ENCODE measurements at regions of chr5 and their contacts with region 1.

Region 1: DNA sequence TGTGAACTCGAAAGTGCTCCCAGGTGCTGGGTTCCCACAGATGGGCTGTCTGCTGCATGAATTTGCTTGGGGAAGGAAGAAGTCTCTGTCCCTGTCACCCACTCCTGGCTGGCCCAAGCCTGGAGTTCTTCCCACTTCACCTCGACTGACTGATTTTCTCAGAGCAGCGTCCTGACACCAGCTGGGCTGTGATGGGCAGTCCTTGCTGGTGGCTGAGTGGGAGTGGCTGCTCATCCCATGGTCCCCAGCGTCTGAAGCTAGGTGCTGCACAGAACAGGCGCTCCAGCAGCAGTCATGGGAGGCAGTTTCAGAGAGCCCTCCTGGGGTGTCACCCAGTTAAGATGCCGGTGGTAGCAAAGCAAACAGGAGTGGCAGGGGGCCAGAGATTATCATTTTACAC is 10.1 kb upstream of the NEURL1B start:
- DNase-seq: no peak
- H3K4me3 ChIP-seq: no peak overlapping the region
- H3K27ac ChIP-seq: no peak overlapping the region
- H3K4me1 ChIP-seq: no peaks in the 10 kb centered on the region
- H3K27me3 ChIP-seq: peaks cover 12% of the 10 kb centered on the region; the same call in 1 of the 2 replicates
- CTCF ChIP-seq: no peak

Region 2: GRCh38 chr5:172403189-172403796 is 227.7 kb before region 1 on chr5:
- CTCF ChIA-PET with region 1: no interaction called
- POLR2A ChIA-PET with region 1: no interaction called
- intact Hi-C with region 1: no loop called
- DNase-seq: no peak
- H3K4me3 ChIP-seq: no peak overlapping the region
- H3K27ac ChIP-seq: no peak overlapping the region
- H3K4me1 ChIP-seq: peaks cover 40% of the 10 kb centered on the region
- H3K27me3 ChIP-seq: no peaks in the 10 kb centered on the region
- CTCF ChIP-seq: no peak

Region 3: GRCh38 chr5:172583931-172584511 is 47.0 kb before region 1 on chr5:
- CTCF ChIA-PET with region 1: interaction called, 12 read pairs
- POLR2A ChIA-PET with region 1: no interaction called
- intact Hi-C with region 1: no loop called
- DNase-seq: no peak
- H3K4me3 ChIP-seq: no peak overlapping the region
- H3K27ac ChIP-seq: no peak overlapping the region
- H3K4me1 ChIP-seq: no peaks in the 10 kb centered on the region
- H3K27me3 ChIP-seq: peaks cover 95% of the 10 kb centered on the region
- CTCF ChIP-seq: no peak

Region 4: DNA sequence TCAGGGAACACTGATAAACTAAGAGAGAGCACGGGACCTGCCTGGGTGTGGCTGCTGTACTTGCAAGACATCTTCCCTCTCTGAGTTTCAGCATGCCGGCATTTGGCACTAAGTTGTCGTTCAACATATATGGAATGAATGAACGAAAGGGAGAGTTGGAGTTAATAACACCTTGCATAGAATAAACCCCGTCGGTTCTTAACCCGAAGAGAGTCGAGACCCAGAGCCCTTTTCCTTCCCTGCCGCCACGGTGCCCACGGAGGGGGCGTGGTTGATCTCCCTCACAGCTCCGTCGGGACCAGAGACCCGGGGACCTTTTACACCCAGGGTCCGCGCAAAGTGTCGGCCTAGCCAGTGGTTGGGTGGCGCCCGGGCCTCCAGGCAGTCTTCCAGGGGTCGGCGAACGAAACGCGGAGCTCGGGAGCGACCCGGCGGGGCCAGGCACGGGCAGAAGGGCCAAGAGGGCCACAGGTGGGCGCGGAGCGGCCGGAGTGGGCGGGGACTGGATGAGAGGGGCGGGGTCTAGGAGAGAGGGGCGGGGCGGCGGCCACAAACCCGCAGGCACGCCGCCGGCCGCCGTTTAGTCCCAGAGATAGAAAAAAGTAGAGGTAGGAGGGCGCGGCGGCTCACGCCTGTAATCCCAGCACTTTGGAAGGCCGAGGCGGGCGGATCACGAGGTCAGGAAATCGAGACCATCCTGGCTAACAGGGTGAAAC is 327.5 kb after region 1 on chr5:
- CTCF ChIA-PET with region 1: no interaction called
- POLR2A ChIA-PET with region 1: no interaction called
- intact Hi-C with region 1: no loop called
- DNase-seq: peak; percentile 55 to 74
- H3K4me3 ChIP-seq: peak overlapping the region; percentile 99
- H3K27ac ChIP-seq: peak overlapping the region; percentile 72
- H3K4me1 ChIP-seq: peaks cover 14% of the 10 kb centered on the region
- H3K27me3 ChIP-seq: no peaks in the 10 kb centered on the region
- CTCF ChIP-seq: no peak

Measured in PC-9 (cell line).